ENCODE measurements at regions of chr5 and their contacts with region 1.

Region 1: DNA sequence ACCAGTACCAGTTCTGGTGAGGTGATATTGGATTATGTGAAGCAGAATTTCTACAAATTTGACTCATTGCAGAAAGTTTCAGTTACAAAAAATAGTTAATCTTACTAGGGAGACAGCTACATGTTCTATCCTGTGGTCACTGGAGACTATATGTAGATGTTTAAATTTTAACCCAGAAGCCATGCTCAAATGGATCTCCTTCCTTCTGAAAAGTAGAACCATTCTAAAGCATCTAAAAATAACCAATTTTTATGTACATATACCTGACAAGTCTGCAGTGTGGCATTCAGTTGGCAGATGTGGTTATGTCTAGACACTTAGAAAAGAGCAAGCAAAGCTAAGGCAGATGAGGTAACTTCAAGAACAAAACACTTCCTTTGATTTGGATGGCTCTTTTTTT is 65.5 kb upstream of the POU4F3 start:
- DNase-seq: no peak
- ATAC-seq: no peak
- H3K4me3 ChIP-seq: no peak overlapping the region
- H3K27ac ChIP-seq: no peak overlapping the region
- H3K4me1 ChIP-seq: no peaks in the 10 kb centered on the region
- H3K27me3 ChIP-seq: no peaks in the 10 kb centered on the region
- CTCF ChIP-seq: no peak

Region 2: DNA sequence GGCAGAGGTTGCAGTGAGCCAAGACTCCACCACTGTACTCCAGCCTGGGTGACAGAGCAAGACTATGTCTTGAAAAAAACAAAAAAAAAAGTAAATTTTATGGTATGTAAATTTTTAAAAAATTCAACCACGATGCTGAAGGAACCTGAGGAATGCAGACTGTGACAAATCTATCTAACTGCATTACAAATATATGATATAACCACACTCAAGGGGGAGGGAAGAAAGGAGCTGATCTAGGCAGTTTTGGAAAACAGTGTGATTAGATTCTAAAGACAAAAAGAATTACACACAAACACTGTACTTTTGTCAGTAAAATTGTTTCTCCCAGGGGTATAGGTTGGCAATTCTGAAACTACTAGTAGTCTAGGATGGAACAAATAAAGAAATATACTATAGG is 107.6 kb before region 1 on chr5:
- intact Hi-C with region 1: loop called (anchors 10 kb)
- DNase-seq: no peak
- ATAC-seq: no peak
- H3K4me3 ChIP-seq: no peak overlapping the region
- H3K27ac ChIP-seq: no peak overlapping the region
- H3K4me1 ChIP-seq: no peaks in the 10 kb centered on the region
- H3K27me3 ChIP-seq: no peaks in the 10 kb centered on the region
- CTCF ChIP-seq: no peak

Region 3: DNA sequence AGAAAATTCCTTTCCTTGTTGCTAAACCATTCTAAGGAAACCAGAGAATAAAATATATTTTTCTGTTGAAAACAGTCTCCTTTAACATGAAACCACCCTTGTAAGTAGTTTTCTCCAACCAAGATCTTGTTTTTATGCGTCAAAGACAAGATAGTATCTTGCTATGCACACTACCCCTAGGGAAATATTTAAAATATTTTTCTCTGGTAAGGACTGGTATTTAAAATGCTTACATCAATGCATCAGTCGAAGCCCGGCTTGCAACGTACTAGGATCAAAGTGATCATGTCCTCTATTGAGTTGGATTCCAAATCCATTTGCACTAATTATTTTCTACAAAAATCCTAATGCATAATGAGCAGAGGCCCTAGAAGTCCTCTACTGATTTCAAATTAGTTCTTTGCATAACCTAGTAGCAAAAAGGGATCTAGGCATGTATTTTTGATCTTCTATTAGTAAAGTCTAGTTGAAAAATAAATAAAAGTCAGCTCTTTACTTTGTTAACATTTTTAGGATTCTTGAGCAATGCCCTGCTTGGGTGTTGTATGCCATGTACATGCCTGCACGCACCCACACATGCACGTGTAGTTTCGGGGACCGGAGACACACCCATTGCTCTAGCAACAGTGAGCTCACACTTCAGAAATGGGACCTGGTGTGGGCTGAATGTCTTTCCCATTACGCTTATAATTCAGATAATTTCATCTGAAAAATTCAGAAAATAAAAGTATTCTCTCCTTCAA is 407.9 kb after region 1 on chr5:
- intact Hi-C with region 1: no loop called
- DNase-seq: no peak
- ATAC-seq: no peak
- H3K4me3 ChIP-seq: no peak overlapping the region
- H3K27ac ChIP-seq: no peak overlapping the region
- H3K4me1 ChIP-seq: no peaks in the 10 kb centered on the region
- H3K27me3 ChIP-seq: no peaks in the 10 kb centered on the region
- CTCF ChIP-seq: no peak

Measured in upper lobe of right lung (tissue), 1 donor.